ENCODE measurements at regions of chr6 and their contacts with region 1.

Region 1: DNA sequence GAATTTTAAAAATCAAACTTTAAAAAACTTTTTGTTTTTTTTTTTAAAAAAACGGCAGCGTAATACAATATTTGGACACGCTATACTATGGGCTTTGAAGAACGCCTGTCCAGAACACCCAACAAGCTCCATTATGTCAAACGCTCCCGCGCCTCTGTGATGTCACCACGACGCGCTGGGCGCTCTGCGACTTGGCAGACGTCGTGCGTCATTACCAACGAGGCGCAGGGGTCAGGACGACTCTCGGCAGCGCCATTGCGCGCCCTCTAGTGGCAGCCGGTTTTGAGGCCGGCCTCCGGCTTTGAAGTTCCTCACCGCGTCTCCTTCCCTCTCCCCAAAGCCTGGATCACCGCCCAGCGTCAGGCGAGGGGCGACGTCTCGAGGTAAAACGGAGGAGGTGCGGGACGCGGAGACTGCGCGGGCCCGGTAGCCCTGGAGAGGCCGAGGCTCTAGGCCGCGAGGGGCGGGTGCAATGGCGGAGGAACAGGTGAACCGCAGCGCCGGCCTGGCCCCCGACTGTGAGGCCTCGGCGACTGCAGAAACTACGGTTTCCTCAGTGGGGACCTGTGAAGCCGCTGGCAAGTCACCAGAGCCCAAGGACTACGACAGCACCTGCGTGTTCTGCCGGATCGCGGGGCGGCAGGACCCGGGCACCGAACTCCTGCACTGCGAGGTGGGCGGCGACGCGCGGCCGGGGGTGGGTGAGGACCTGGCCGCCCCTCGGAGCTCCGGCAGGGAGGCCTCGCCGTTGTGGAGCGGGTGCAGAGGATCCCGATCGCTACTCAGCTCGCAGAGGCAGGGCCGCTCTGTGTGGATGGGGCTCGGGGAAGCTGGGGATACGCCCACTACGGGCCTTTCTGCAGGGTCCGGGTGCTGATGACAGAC is at the start of gene HINT3:
- ATAC-seq: peak; percentile 87 to 93 (median 90)
- H3K4me3 ChIP-seq: peak within 1 kb of the TSS; percentile 63 to 82 (median 73)
- H3K27ac ChIP-seq: peak within 1 kb of the TSS; percentile 83 to 94
- H3K4me1 ChIP-seq: peaks cover 0 to 15% of the 10 kb centered on the region in 2 donors
- total RNA-seq, gene HINT3: 13.3 to 49.6 (median 30.3) TPM

Region 2: DNA sequence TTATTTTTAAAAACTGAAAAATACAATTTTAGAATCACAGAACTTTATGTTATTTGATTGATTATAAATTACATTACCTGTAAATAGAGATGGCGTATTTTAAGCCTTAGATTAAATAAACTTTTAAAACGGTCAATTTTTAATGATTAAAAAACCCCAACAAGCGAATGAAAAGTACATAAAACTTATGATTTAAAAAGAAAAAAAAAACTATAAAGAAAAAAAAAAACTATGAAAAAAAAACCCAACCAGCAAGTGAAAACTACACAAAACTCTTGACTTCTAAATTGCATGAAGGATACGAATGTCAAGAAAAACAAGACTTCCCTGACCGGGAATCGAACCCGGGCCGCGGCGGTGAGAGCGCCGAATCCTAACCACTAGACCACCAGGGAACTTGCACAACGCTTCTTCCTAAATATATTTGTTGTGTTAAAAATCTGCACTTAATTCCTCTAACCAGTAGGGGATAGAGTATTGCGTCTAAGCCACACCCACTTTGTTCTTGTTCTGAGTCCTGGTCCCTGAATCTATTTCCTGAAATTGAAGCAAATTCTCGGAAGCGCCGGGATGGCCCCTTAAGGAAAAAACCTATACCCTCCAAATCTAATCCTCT is 176.7 kb before region 1 on chr6:
- in situ Hi-C with region 1: loop called in 7 of 9 experiments (anchors 10 to 25 kb)
- ATAC-seq: peak; percentile 78 to 92 (median 88)
- H3K4me3 ChIP-seq: peak overlapping the region; percentile 52 to 57 (median 53)
- H3K27ac ChIP-seq: peak overlapping the region; percentile 76 to 86
- H3K4me1 ChIP-seq: peaks cover 5 to 11% of the 10 kb centered on the region in 2 donors

Region 3: GRCh38 chr6:125858427-125859320 is 98.1 kb before region 1 on chr6:
- in situ Hi-C with region 1: loop called in 1 of 9 experiments (anchors 25 kb)
- ATAC-seq: peak; percentile 38 to 100 (median 78)
- H3K4me3 ChIP-seq: no peak overlapping the region
- H3K27ac ChIP-seq: no peak overlapping the region
- H3K4me1 ChIP-seq: no peaks in the 10 kb centered on the region

Region 4: DNA sequence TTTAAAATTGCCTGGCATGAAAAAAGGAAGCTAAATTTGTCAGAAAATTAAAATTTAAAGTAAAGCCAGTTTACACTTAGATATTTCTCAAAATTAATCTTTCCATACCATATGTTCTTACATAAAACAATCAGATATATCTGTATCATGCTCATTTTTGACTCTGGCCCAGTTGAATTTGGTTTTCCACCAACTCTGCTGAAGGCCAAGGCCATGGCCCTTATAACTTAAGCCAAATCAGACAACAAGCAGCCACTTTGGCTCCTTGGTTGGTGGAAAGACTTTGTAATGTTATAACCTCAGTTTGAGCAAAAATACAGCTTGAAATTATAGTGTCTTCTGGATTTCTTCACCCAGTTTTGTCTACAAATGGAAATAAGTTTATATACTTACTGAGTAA is 480.5 kb after region 1 on chr6:
- in situ Hi-C with region 1: no loop called
- ATAC-seq: no peak
- H3K4me3 ChIP-seq: no peak overlapping the region
- H3K27ac ChIP-seq: no peak overlapping the region
- H3K4me1 ChIP-seq: no peaks in the 10 kb centered on the region